OCI-LY7 (cell line): ENCODE measurements at regions of chr20 and their contacts with region 1.

Region 1: GRCh38 chr20:48672113-48672991 is 155.4 kb downstream of the PREX1 start:
- DNase-seq: no peak
- H3K4me3 ChIP-seq: no peak overlapping the region
- H3K27ac ChIP-seq: no peak overlapping the region
- H3K4me1 ChIP-seq: no peaks in the 10 kb centered on the region
- CTCF ChIP-seq: no peak

Region 2: DNA sequence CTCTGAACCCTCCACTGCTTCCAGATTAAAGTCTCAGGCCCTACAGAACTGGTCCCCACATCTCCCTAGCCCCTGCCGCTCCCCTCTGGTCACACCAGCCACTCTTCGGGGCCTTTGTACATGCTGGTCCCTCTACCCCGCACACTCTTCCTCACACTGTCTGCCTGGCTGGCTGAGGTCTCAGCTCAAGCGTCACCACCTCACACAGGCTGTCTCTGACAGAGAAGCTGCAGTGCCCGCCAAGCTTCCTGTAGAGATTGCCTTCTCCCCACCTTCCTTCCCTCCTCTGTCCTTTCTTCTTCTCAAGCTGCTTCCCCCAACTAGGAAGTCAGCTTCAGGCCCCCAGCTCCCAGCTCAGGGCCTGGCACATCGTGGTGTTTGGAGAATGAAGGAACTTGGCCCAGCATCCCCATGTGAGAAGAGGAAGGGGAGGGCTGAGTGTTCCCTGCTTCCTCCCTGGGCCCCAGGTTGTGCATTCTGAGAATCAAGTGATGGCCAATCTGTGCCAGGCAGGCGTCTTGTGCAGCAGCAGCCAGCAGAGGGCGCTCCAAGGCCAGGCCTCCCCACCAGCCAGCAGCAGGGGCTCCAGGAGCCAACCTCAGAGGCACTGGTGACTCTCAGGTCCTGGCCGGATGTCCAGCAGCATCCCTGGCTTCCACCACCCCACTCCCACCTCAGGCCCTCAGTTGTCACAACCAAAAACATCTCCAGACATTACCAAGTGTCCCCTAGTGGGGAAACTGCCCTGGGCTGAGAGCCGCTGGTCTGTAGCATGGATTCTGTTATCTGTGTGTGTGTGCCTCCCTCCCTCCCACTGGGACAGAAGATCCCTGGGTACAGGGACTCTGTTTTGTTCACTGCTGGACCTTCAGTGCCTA is 36.7 kb before region 1 on chr20:
- CTCF ChIA-PET with region 1: no interaction called
- POLR2A ChIA-PET with region 1: no interaction called
- intact Hi-C with region 1: no loop called
- DNase-seq: peak; percentile 70
- H3K4me3 ChIP-seq: no peak overlapping the region
- H3K27ac ChIP-seq: no peak overlapping the region
- H3K4me1 ChIP-seq: no peaks in the 10 kb centered on the region
- CTCF ChIP-seq: peak; percentile 96

Region 3: DNA sequence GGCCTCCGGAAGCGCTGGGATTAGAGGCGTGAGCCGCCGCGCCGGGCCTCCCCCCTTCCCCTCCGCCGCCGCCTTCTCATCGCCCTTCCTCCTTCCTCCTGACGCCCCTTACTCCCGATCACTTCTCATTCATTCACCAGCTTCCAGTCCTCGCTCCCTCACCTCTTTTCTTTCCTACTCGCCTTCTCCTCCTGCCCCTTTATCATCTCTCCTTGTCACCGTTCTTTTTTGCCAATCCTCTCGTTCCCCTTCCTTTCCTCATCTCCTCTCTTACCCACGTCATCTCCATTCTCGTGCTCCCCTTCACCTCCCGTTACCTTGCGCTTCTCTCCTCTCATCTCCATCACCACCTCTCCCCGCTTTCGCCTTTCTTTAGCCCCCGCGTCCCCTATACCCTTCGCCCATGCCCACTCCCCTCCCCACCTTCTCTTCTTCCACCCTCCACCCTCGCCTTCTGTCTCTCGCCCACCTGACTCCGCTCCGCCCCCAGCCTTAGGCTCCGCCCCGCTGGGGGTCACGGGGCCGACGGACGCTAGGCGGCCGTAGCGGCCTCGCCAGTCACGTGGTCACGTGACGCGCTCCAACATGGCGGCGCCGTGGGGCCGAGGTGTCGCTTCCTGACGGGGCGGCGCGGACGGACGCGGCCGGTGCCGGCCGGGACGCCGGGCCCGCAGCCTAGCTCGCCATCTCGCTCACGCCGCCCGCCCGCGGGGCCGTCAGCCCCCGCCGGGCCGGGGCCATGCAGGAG is 249.0 kb after region 1 on chr20 and contains the start of gene ARFGEF2:
- CTCF ChIA-PET with region 1: no interaction called
- POLR2A ChIA-PET with region 1: interaction called, 10 read pairs
- intact Hi-C with region 1: no loop called
- DNase-seq: peak; percentile 97
- H3K4me3 ChIP-seq: peak within 1 kb of the TSS; percentile 91
- H3K27ac ChIP-seq: peak within 1 kb of the TSS; percentile 78
- H3K4me1 ChIP-seq: peaks cover 48% of the 10 kb centered on the region
- CTCF ChIP-seq: no peak; the same call in 1 of the 2 replicates
- total RNA-seq, gene ARFGEF2: 18.4 and 23.4 TPM in 2 replicates